Activated naive CD4-positive, alpha-beta T cell treated with anti-CD3 and anti-CD28 coated beads for 36 hours (primary cell): ENCODE measurements at regions of chr1 and their contacts with region 1.

Region 1: GRCh38 chr1:206982216-206982615 is 12.0 kb upstream of the FCAMR start:
- DNase-seq: peak; percentile 78
- H3K4me3 Mint-ChIP-seq: no peak overlapping the region
- H3K27ac Mint-ChIP-seq: no peak overlapping the region
- H3K4me1 Mint-ChIP-seq: no peaks in the 10 kb centered on the region
- H3K27me3 Mint-ChIP-seq: no peaks in the 10 kb centered on the region

Region 2: GRCh38 chr1:206635080-206635977 is 346.9 kb before region 1 on chr1 and contains the start of gene DYRK3:
- CTCF ChIA-PET with region 1: interaction called, 5 read pairs
- intact Hi-C with region 1: loop called (anchors 2 kb)
- DNase-seq: peak; percentile 93
- H3K4me3 Mint-ChIP-seq: peak within 1 kb of the TSS; percentile 83
- H3K27ac Mint-ChIP-seq: peak within 1 kb of the TSS; percentile 92
- H3K4me1 Mint-ChIP-seq: peaks cover 27% of the 10 kb centered on the region
- H3K27me3 Mint-ChIP-seq: peaks cover 21% of the 10 kb centered on the region
- total RNA-seq, gene DYRK3: 6.5 to 6.7 TPM

Region 3: DNA sequence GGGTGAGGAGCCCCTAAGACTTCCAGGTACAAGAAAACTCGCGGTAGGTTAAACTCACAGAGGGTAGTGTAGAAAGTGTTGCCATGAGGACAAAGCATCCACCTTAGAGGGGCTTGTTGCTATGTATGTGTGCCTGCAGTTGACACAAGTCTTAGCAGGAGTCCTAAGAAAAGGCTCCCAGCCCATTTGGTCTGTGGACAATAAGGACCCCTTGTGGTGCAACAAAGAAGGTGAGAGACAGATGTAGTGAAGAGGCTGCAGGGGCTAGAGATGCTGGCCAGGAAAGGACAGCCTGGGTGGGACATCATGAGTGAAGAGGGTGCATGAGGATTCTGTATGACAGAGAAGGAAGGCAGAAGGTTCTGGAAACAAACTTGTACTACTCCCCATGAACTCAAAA is 173.6 kb before region 1 on chr1:
- CTCF ChIA-PET with region 1: interaction called, 30 read pairs
- intact Hi-C with region 1: loop called (anchors 1 kb)
- DNase-seq: peak; percentile 70
- H3K4me3 Mint-ChIP-seq: no peak overlapping the region
- H3K27ac Mint-ChIP-seq: no peak overlapping the region
- H3K4me1 Mint-ChIP-seq: peaks cover 42% of the 10 kb centered on the region
- H3K27me3 Mint-ChIP-seq: no peaks in the 10 kb centered on the region

Region 4: DNA sequence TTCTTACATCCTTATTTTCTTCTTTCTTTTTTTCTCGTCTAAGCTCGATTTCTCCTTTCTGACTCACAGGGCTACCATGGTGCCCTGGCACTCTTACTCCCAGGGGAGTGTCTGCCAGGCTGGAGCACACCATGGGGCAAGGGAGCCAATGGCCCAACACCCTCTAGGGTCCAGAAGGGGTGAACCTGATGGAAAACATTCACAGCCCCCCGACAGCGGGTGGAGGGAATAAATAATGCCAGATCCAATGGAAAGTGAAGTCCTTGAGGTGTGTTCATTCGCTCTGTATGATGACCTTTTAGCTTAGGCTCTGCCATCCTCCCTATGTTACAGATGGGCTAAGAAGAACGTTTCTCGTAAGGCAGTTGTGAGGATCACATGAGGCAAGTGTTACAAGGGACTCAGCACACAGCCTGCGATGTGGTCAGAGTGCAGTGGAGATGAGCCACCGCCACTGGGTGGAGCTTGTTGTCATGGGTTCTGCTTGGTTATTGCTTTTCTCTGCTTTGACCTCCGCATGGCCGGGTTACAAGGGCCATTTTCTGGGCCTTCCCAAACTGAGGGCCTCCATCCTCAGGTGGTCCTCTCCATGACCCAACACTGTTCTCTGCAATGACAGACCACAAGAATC is 57.0 kb before region 1 on chr1:
- CTCF ChIA-PET with region 1: interaction called, 124 read pairs
- intact Hi-C with region 1: no loop called
- DNase-seq: peak; percentile 78
- H3K4me3 Mint-ChIP-seq: no peak overlapping the region
- H3K27ac Mint-ChIP-seq: no peak overlapping the region
- H3K4me1 Mint-ChIP-seq: peaks cover 24% of the 10 kb centered on the region
- H3K27me3 Mint-ChIP-seq: no peaks in the 10 kb centered on the region

Region 5: GRCh38 chr1:206952171-206952570 is 30.0 kb before region 1 on chr1:
- CTCF ChIA-PET with region 1: interaction called, 10 read pairs
- intact Hi-C with region 1: no loop called
- DNase-seq: no peak
- H3K4me3 Mint-ChIP-seq: no peak overlapping the region
- H3K27ac Mint-ChIP-seq: no peak overlapping the region
- H3K4me1 Mint-ChIP-seq: peaks cover 13% of the 10 kb centered on the region
- H3K27me3 Mint-ChIP-seq: no peaks in the 10 kb centered on the region

Region 6: DNA sequence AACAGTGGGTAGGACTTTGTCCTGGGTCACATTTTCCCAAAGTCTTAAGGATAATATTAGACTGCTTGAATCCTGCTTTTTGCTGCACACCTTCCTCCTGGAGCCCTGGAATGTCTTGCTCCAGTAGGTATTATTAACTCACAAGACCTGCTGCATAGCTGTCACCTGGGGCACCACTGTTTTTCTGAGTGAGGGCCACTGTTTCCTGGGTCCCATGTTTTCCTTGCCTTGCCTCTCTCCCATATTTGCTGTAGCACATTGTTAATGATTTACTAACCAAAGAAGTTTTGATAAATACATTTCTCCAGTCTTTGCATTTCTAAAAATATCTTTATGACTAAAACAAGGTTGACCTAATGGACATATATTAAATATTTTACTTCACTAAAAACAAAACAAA is 10.6 kb after region 1 on chr1:
- CTCF ChIA-PET with region 1: interaction called, 20 read pairs
- intact Hi-C with region 1: no loop called
- DNase-seq: no peak
- H3K4me3 Mint-ChIP-seq: no peak overlapping the region
- H3K27ac Mint-ChIP-seq: no peak overlapping the region
- H3K4me1 Mint-ChIP-seq: no peaks in the 10 kb centered on the region
- H3K27me3 Mint-ChIP-seq: peaks cover 4% of the 10 kb centered on the region

Region 7: DNA sequence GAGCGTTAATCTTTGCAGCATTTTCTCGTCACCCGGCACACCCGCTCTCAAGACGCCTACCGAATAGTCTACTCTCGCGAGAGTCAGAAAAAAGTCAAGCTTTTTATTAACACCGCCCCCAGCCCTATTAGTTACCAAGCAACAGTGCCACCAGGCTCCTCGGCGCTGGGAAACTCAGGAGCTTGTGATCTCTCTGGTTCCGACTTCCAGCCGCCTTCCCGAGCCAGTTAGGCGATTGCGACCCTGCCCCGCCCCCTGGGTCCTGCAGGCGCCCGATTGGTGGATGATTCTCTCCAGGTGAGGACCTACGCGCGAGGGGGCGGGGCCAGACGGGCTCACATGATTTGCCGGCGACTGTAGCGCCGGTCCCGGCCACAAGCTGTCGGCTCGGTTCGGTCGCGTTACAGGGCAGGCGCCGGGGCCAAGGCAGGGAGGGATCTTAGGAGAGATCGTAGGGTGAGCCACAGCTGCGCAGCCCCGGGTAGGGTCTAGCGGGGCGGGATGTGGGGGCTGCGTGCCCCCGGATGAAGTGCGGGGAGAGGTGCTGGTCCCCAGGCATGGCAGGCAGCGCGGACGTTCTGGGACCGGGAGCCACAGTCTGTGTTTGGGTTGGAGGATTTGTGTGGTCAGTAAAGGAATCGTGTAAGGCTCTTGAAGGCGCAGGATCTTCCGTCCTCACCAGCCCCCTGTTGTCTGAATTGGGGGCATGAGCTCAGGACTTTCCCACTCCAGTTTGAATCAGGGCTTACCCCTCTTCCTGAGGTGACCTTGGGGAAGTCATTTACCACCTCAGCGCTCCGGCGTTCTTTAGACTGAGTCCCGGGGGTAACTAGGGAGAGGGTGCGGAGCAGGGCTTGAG is 70.9 kb after region 1 on chr1 and contains the start of gene PFKFB2:
- CTCF ChIA-PET with region 1: no interaction called
- intact Hi-C with region 1: no loop called
- DNase-seq: peak; percentile 97
- H3K4me3 Mint-ChIP-seq: peak within 1 kb of the TSS; percentile 97
- H3K27ac Mint-ChIP-seq: peak within 1 kb of the TSS; percentile 68
- H3K4me1 Mint-ChIP-seq: peaks cover 36% of the 10 kb centered on the region
- H3K27me3 Mint-ChIP-seq: no peaks in the 10 kb centered on the region
- total RNA-seq, gene PFKFB2: 3.4 to 6.2 TPM